ENCODE measurements at regions of chr14 and their contacts with region 1.

Region 1: GRCh38 chr14:99266181-99267178 is 5.5 kb downstream of the BCL11B start:
- DNase-seq: peak; percentile 65 to 71
- ATAC-seq: peak; percentile 71 to 88; a peak in 5 of 6 replicates
- H3K4me3 ChIP-seq: peak overlapping the region; percentile 26; the same call in 2 of the 3 replicates
- H3K27ac ChIP-seq: peak overlapping the region in 1 of 2 experiments; percentile 49; a peak in 1 of 6 replicates
- H3K4me1 ChIP-seq: 0 out of 3 replicates have a peak, but pooled peaks cover 3% of the 10 kb centered on the region
- CTCF ChIP-seq: peak; percentile 93
- EP300 ChIP-seq: no peak
- POLR2A ChIP-seq: no peak
- RAD21 ChIP-seq: peak; percentile 98

Region 2: GRCh38 chr14:97978341-97978740 is 1288.1 kb before region 1 on chr14:
- CTCF ChIA-PET with region 1: interaction called, 13 read pairs
- POLR2A ChIA-PET with region 1: interaction called, 3 read pairs
- DNase-seq: peak; percentile 39 to 42
- ATAC-seq: peak; percentile 92 to 96
- H3K4me3 ChIP-seq: no peak overlapping the region
- H3K27ac ChIP-seq: no peak overlapping the region
- H3K4me1 ChIP-seq: no peaks in the 10 kb centered on the region
- CTCF ChIP-seq: peak; percentile 28
- EP300 ChIP-seq: no peak
- POLR2A ChIP-seq: no peak
- RAD21 ChIP-seq: no peak; a peak in 1 of 5 replicates

Region 3: DNA sequence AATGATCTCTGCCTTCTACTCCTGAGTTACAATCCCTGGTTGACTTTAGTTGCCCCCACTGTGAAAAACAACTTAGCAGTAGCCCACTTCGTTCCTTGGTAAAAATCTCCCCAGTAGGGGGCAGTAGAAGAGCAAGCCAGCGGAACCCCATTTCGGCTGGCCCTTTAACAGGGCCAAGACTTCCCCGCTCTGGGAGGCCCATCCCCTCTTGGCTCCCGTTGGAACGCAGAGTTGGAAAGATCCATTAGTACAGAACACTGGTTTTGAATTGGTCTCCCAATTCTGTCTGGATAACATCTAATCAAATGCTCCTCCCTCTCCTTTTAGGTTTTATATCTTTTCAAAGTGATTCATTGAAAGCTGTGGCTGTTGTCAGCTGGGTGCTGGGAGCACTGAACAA is 1127.8 kb before region 1 on chr14:
- CTCF ChIA-PET with region 1: interaction called, 28 read pairs
- POLR2A ChIA-PET with region 1: no interaction called
- DNase-seq: peak; percentile 13 to 30
- ATAC-seq: peak in 1 of 2 experiments; percentile 78; a peak in 4 of 6 replicates
- H3K4me3 ChIP-seq: no peak overlapping the region
- H3K27ac ChIP-seq: no peak overlapping the region
- H3K4me1 ChIP-seq: no peaks in the 10 kb centered on the region
- CTCF ChIP-seq: peak; percentile 50
- EP300 ChIP-seq: no peak
- POLR2A ChIP-seq: no peak
- RAD21 ChIP-seq: peak; percentile 50 to 67

Region 4: DNA sequence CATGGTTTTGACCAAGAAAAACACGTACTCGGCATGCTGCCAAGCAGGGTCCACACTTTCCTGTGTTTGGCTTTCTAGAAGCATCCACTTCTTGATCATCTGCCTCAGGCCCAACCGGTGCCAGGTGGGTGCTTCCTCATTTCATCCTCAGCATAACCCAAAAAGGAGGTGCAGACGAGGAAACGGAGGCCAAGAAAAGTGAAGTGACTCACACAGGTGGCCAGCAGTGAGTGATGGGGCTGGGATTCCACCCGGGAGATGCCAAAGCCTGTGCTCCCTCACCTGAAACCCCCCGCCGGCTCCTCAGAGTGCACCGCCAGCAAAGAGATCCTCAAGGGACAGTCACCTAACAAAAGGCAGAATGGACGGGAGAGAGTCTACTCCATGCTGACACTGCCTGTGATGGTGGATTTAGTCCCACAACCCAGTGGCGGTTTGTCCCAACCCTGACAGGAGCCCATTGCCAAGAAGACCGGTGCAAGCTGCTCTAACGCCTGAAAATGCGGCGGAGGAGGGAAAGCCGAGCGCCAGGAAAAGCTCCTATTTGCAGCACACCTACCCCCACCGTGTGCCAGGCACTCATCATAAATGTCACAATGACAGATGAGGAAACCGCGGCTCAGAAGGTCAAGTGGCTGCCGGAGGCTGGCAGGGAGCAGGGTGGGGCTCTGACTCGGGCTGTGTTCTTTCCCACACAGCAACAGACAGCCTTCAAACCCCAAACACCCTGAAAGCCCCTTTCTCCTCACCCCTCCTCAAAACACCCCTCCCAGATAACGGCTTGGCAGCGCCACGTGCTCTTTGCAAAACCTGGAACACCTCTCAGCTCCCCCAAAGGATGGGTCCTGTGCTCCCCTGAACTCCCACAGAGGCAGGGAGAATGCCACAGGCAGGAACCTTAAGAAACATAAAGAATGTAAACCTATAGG is 13.3 kb before region 1 on chr14:
- CTCF ChIA-PET with region 1: interaction called, 14 read pairs
- POLR2A ChIA-PET with region 1: no interaction called
- DNase-seq: no peak
- ATAC-seq: peak in 1 of 2 experiments; percentile 26; a peak in 1 of 6 replicates
- H3K4me3 ChIP-seq: no peak overlapping the region
- H3K27ac ChIP-seq: no peak overlapping the region
- H3K4me1 ChIP-seq: peaks cover 6% of the 10 kb centered on the region; the same call in 1 of the 3 replicates
- CTCF ChIP-seq: no peak
- EP300 ChIP-seq: no peak
- POLR2A ChIP-seq: no peak
- RAD21 ChIP-seq: no peak

Region 5: DNA sequence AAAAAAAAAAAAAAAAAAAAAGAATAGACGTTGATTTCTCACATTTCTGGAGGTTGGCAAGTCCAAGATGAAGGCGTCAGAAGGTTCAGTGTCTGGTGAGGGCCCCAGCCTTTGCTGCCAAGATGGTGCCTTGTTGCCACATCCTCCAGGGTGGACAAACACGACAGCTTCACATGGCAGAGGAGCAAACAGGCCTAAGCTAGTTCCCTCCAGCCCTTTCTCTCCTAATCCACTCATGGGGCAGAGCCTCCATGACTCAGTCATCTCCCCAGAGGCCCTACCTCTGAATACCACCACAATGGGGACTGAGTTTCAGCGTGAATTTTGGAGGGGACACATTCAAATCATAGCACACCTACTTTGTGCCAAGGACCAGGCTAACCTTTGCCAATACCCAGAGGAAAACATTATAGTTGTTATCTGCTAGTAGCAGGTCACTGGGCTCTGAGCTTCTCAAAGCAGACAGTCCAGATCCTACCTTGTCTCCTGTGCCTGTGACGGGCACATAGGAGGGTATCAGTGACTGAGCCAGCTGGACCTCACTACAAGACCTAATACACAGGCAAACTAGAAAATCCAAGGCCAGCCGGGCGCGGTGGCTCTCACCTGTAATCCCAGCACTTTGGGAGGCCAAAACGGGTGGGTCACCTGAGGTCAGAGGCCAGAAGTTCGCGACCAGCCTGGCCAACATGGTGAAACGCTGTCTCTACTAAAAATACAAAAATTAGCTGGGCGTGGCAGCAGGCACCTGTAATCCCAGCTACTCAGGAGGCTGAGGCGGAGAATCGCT is 16.0 kb after region 1 on chr14:
- CTCF ChIA-PET with region 1: interaction called, 6 read pairs
- POLR2A ChIA-PET with region 1: interaction called, 13 read pairs
- DNase-seq: no peak
- ATAC-seq: no peak
- H3K4me3 ChIP-seq: no peak overlapping the region
- H3K27ac ChIP-seq: no peak overlapping the region
- H3K4me1 ChIP-seq: no peaks in the 10 kb centered on the region
- CTCF ChIP-seq: no peak
- EP300 ChIP-seq: no peak
- POLR2A ChIP-seq: no peak
- RAD21 ChIP-seq: no peak

Measured in A549 (cell line).